Dorsolateral prefrontal cortex (tissue), 120 donors: ENCODE measurements at regions of chr20 and their contacts with region 1.

Region 1: DNA sequence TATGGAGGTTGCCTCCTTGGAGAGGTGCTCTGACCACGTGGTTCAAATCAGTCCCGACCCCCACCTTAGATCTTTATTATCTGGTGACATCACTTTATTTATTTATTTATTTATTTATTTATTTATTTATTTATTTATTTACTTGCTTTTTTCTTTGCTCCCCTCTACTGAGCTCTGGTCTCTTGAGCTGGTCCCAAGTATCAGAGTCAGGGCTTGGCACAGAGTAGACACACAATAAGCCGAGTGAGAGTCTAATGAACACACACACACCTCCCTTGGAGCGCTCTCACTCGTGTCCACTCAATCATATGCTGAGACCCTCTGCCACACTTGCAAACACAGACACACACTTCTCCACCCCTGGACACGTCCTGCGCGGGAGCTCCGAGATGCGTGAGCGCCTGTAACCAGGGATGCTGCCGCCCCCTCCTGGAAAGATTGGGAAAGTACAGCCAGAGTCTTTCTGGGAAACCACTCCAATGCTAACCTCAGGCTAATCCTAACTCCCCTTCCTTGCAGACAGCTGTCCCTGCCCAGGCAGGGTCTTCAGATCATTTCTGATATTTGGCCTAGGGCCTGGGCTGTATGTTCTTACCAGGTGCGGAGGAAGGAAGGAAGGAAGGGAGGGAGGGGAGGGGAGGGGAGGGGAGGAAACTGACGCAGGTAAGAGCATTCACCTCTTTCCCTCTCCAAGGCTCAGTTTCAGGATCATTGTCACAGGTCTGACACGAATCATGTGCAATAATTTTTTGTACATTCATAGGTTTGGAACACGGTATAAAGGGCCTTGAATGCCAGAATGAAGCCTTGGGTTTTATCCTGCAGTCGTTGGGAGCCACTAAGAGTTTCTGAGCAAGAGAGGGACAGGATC is 70.9 kb downstream of the STK35 start:
- DNase-seq: peak; percentile 67 to 87 (median 82)
- H3K4me3 ChIP-seq: peak overlapping the region in 16 of 59 donors; percentile 11 to 43 (median 31)
- H3K27ac ChIP-seq: no peak overlapping the region
- H3K27me3 ChIP-seq: no peaks in the 10 kb centered on the region
- CTCF ChIP-seq: peak; percentile 79 to 97 (median 91)

Region 2: GRCh38 chr20:1764136-1765033 is 408.2 kb before region 1 on chr20:
- intact Hi-C with region 1: loop called (anchors 2 to 5 kb)
- DNase-seq: peak; percentile 65 to 92 (median 81)
- H3K4me3 ChIP-seq: peak overlapping the region in 21 of 59 donors; percentile 2 to 41 (median 29)
- H3K27ac ChIP-seq: peak overlapping the region in 2 of 59 donors; percentile 3 to 34
- H3K27me3 ChIP-seq: no peaks in the 10 kb centered on the region
- CTCF ChIP-seq: peak; percentile 62 to 96 (median 84)

Region 3: GRCh38 chr20:1965520-1966351 is 206.8 kb before region 1 on chr20:
- intact Hi-C with region 1: loop called (anchors 1 to 2 kb)
- DNase-seq: peak; percentile 67 to 85 (median 82)
- H3K4me3 ChIP-seq: peak overlapping the region in 55 of 59 donors; percentile 2 to 58 (median 35)
- H3K27ac ChIP-seq: peak overlapping the region in 17 of 59 donors; percentile 1 to 64 (median 17)
- H3K27me3 ChIP-seq: no peaks in the 10 kb centered on the region
- CTCF ChIP-seq: peak; percentile 86 to 99 (median 96)

Region 4: DNA sequence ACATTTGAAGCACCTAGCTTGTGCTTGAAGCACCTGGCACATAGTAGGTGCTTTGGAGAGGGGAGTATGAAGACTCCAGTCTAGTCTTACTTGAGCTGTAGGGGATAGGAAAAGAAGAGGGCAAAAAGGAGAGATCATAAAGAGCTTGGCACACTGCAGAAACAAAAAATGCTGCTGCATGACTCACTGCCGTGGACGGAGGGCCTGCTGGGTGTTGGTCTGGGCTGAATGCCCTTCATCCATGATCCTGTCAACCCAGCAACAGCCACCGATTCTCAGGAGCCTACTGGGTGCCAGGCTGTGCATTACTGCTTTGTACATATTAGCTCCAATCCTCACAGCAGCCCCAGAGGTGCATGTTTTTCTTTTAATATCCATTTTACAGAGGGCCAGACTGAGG is 184.7 kb before region 1 on chr20:
- intact Hi-C with region 1: no loop called
- DNase-seq: no peak
- H3K4me3 ChIP-seq: no peak overlapping the region
- H3K27ac ChIP-seq: no peak overlapping the region
- H3K27me3 ChIP-seq: peaks cover 0 to 14% (median 0%) of the 10 kb centered on the region in 45 donors
- CTCF ChIP-seq: no peak

Region 5: DNA sequence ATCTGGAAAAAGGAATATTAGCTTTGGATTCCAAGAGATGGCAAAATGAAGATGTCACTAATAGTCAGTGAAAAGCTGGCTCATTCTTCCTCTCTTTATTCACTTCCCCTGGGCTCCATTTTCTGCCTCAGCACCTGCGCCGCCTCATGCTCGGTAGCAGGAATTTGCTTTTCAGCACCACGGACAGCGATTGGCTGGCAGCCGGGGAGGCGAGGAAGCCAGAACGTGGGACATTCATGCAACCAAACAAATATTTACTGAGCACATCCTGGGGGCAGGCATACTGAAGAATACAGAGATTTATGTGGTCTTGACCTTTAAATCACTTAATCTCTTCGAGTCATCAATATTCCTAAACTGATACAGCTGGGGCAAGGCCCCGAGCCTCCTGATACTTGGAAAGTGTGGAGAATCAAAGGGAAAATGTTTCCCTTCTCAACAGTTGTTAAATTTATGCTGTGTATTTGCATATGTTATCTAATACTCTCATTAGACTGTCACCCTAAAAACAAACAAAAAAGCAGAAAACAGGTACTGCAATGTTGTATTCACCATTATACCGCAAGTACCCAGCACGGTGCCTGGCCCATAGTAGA is 166.6 kb before region 1 on chr20:
- intact Hi-C with region 1: loop called in 1 of 2 experiments (anchors 2 kb)
- DNase-seq: peak in 8 of 10 donors; percentile 38 to 68 (median 47)
- H3K4me3 ChIP-seq: no peak overlapping the region
- H3K27ac ChIP-seq: no peak overlapping the region
- H3K27me3 ChIP-seq: peaks cover 0 to 7% (median 0%) of the 10 kb centered on the region in 45 donors
- CTCF ChIP-seq: peak in 19 of 56 donors; percentile 3 to 38 (median 19)

Region 6: GRCh38 chr20:2101865-2102584 is 70.5 kb before region 1 on chr20:
- intact Hi-C with region 1: loop called in 1 of 2 experiments (anchors 5 kb)
- DNase-seq: peak; percentile 84 to 92 (median 90)
- H3K4me3 ChIP-seq: peak overlapping the region; percentile 64 to 99 (median 93)
- H3K27ac ChIP-seq: peak overlapping the region; percentile 96 to 100 (median 100)
- H3K27me3 ChIP-seq: no peaks in the 10 kb centered on the region
- CTCF ChIP-seq: peak in 15 of 56 donors; percentile 4 to 40 (median 12)

Region 7: GRCh38 chr20:2585811-2586210 is 413.3 kb after region 1 on chr20:
- intact Hi-C with region 1: no loop called
- DNase-seq: no peak
- H3K4me3 ChIP-seq: no peak overlapping the region
- H3K27ac ChIP-seq: no peak overlapping the region
- H3K27me3 ChIP-seq: peaks cover 0 to under 1% (median 0%) of the 10 kb centered on the region in 45 donors
- CTCF ChIP-seq: no peak